ENCODE measurements at regions of chr5 and their contacts with region 1.

Region 1: GRCh38 chr5:96336351-96336985 is 96.6 kb downstream of the PCSK1 start:
- DNase-seq: peak; percentile 72

Region 2: DNA sequence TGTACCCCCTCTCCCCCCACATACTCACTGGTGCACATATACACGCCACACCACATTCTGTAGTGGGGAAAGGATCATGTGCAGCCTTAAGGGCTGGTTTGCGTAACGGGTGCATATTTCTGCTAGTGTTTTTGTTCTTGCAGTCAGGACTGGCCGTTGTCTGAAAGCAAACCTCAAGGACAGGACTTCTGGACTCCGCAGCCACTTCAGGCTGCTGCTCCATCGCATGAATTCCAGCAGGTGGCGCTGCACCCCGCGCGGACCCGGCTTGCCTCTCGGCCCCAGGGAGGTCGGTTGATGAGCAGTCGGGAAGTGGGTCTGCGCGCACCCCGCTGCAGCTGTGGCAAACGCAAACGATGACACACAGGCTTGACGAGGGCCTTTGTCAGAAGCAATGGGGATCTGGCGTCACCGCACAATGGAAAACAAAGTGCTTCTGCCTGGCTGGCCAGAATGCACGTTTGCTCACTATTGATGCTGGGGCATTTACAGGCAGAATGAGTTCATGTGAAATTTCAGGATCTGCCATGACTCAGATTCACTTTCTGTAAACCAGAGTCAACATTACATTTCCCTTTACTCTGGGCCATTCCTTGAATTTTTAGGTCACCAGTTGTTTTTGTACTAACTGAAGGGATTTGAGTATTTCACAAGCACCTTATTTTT is 477.7 kb before region 1 on chr5:
- in situ Hi-C with region 1: loop called (anchors 10 kb)
- DNase-seq: peak; percentile 90

Region 3: GRCh38 chr5:96957254-96958049 is 621.0 kb after region 1 on chr5:
- in situ Hi-C with region 1: no loop called
- DNase-seq: no peak